Activated T-helper 1 cell treated with anti-CD3 and anti-CD28 coated beads, Interleukin-12 subunit alpha, Interleukin-12 subunit beta, Interleukin-2, Interleukin-4 antibody, amounts not matched to agents 30 ng/mL and 10 ng/mL and 1 ng/mL, durations not matched to agents 14 hours and 24 hours and 36 hours (primary cell): ENCODE measurements at regions of chr1 and their contacts with region 1.

Region 1: DNA sequence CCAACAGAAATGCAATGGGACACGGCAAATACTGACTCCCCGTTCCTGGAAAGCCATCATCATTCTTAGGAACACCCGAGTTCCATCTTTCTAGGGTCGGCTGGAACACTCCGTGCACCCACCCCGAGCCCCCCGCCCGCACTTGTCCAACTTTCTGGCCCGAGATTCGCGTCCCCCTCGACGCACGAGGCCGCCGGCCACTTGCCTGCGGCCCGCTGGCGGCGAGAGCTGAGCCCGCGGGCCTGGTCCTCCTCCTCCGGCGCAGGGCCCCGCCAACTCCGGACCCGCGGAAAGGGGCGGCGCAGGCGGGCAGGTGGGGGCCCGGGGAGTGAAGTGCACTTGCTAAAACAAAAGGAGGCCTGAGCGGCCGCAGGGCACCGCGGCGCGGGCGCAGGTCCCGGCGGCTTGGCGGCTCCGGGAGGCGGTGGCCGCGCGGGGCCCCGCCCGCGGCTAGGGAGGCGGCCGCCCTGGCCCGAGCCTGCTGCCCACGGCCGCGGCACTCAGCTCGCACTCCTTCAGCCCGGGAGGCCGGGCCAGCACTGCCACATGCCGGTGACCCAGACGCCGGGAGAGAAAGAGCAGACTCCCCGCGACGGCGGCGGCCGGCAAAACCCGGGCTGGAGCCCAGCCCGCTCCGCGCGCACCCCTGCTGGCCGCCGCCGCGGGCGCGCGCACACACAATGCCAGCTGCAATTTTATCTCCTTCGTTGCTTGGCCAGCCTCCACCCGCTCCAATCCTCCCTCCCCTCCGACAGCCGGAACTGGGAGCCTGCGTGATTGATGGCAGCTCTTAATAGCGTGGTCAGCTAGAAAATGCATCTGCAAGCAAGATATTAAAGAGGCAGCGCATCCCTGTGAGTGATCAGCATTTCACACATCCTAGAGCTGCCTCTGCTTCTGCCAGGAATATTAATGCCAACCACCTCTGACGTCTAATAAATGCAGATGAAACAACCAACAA is 114.3 kb downstream of the RERE start:
- DNase-seq: peak; percentile 69
- H3K4me3 Mint-ChIP-seq: peak overlapping the region; percentile 97
- H3K27ac Mint-ChIP-seq: peak overlapping the region; percentile 89
- H3K4me1 Mint-ChIP-seq: peaks cover 58% of the 10 kb centered on the region
- H3K27me3 Mint-ChIP-seq: peaks cover 3% of the 10 kb centered on the region

Region 2: GRCh38 chr1:8567146-8567545 is 136.0 kb before region 1 on chr1:
- intact Hi-C with region 1: no loop called
- DNase-seq: no peak
- H3K4me3 Mint-ChIP-seq: no peak overlapping the region
- H3K27ac Mint-ChIP-seq: no peak overlapping the region
- H3K4me1 Mint-ChIP-seq: peaks cover 42% of the 10 kb centered on the region
- H3K27me3 Mint-ChIP-seq: no peaks in the 10 kb centered on the region

Region 3: DNA sequence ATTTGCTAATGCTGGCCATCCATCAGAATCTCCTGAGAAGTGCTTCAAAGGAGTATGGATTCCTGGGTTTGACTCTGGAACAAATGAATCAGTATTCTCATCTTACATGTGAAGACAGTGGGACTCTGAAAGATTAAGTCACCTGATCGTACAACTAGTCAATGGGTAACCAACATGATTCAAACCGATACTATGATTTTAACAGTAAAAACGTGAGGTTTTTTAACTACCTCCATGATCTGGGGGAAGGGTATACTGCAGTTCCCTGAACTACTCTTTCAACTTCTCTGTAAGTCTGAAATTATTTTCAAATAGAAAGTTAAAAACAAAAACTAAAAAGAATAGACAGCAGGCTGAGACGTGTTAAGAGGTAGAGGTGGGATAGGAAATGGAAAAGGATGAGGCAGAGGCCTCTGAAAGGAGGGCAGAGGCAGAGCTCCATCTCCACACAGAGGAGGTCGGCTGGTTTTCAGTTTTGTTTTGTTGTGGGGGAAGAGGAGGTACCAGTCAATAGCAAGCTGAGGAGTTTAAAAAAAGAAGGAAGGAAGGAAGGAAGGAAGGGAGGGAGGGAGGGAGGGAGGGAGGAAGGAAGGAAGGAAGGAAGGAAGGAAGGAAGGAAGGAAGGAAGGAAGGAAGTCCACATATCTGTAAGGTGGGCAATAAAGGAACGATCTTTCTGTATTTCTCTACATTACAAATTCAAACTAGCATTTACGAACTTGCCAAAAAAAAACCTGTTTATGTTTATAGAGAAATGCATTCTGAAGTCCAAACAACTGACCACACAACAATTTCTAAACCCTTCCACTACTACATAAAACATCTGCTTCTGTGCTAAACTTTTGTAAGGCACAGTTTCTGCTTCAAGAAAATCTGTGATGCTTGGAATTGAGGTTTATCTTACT is 98.8 kb before region 1 on chr1:
- intact Hi-C with region 1: loop called (anchors 1 kb)
- DNase-seq: peak; percentile 34
- H3K4me3 Mint-ChIP-seq: peak overlapping the region; percentile 61
- H3K27ac Mint-ChIP-seq: peak overlapping the region; percentile 94
- H3K4me1 Mint-ChIP-seq: peaks cover 48% of the 10 kb centered on the region
- H3K27me3 Mint-ChIP-seq: no peaks in the 10 kb centered on the region

Region 4: GRCh38 chr1:8660411-8660828 is 42.7 kb before region 1 on chr1:
- intact Hi-C with region 1: loop called (anchors 5 kb)
- DNase-seq: no peak
- H3K4me3 Mint-ChIP-seq: no peak overlapping the region
- H3K27ac Mint-ChIP-seq: no peak overlapping the region
- H3K4me1 Mint-ChIP-seq: peaks cover 11% of the 10 kb centered on the region
- H3K27me3 Mint-ChIP-seq: peaks cover 1% of the 10 kb centered on the region

Region 5: GRCh38 chr1:8679395-8679800 is 23.7 kb before region 1 on chr1:
- intact Hi-C with region 1: loop called (anchors 1 kb)
- DNase-seq: no peak
- H3K4me3 Mint-ChIP-seq: no peak overlapping the region
- H3K27ac Mint-ChIP-seq: no peak overlapping the region
- H3K4me1 Mint-ChIP-seq: peaks cover 23% of the 10 kb centered on the region
- H3K27me3 Mint-ChIP-seq: no peaks in the 10 kb centered on the region

Region 6: DNA sequence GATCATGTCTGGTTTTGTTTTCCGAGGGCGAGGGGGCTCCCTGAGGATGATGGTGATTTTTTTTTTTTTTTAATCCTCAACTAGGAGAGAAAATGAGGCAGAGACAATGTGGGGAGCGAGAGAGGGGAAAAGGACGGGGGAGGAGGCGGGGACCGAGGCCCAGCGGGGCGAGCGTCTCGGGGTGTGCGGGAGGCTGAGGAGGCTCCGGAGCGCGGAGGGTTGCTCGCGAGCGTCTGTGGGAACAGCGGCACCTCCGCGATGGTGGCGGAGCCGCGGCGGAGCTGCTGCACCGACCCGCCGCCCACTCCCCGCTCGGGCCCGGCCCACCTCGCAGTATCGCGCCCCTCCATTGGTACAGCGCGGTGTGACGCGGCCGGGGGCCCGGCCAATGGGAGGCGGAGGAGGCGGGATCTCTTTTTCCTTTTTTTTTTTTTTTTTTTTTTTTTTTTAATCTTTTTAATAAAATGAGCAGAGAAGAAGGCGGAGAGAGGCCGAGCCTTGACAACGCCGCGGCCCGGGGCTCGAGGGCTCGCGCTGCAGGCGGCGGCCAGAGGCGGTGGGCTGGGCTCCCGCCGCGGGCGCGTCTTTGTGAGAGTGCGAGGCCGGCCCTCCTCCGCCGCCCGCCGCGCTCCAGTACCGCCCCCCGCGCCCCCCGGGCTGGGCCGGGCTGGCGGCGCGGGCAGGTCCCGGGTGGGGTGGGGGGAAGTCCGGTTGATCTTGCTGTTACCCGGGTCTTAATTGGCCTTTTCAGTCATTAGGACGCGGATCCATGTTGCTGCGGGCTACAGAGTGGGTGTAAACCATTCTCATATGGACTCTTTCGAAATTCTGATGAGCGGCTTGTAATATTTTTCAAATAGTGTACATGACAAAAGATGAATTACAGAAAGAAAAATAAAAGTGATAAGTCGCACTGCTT is 114.5 kb after region 1 on chr1 and contains the start of gene RERE:
- intact Hi-C with region 1: loop called (anchors 2 kb)
- DNase-seq: peak; percentile 96
- H3K4me3 Mint-ChIP-seq: peak within 1 kb of the TSS; percentile 86
- H3K27ac Mint-ChIP-seq: peak within 1 kb of the TSS; percentile 93
- H3K4me1 Mint-ChIP-seq: peaks cover 44% of the 10 kb centered on the region
- H3K27me3 Mint-ChIP-seq: peaks cover 12% of the 10 kb centered on the region
- total RNA-seq, gene RERE: 82.0 and 90.9 TPM in 2 replicates

Region 7: DNA sequence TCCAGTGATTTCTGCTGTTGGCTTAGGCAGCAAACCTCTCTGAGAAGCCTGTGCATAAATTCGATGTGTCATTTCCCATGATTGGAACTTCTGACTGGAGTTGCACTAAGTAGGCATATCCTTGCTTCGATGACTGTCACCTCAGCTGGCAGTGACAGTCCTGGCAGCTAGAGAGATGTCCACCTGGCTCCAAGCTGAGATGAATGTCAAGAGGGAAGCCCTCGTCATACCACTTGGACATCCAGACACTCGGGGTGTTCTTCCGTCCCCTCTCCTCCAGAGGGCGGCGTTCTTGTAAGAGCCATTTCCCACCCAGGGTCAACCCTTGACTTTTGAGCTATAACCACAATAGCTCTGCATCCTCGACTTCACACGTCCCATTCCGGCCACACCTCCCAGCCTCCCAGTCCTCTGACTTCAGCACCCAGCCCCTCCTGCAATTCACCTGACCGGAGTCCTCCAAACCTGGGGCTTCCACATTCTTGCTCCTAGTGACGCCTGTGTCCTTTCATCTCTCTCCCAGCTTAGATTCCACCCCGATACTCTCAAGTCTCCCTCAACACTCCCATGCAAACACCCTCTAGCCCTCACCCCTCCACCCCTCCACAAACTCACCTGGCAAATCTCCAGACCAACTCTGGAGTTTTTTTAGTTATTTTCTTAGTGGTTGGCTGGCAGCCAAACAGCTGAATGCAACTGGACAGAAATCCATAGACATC is 259.8 kb after region 1 on chr1:
- intact Hi-C with region 1: loop called (anchors 10 kb)
- DNase-seq: no peak
- H3K4me3 Mint-ChIP-seq: peak overlapping the region; percentile 49
- H3K27ac Mint-ChIP-seq: peak overlapping the region; percentile 74
- H3K4me1 Mint-ChIP-seq: peaks cover 85% of the 10 kb centered on the region
- H3K27me3 Mint-ChIP-seq: no peaks in the 10 kb centered on the region

Region 8: DNA sequence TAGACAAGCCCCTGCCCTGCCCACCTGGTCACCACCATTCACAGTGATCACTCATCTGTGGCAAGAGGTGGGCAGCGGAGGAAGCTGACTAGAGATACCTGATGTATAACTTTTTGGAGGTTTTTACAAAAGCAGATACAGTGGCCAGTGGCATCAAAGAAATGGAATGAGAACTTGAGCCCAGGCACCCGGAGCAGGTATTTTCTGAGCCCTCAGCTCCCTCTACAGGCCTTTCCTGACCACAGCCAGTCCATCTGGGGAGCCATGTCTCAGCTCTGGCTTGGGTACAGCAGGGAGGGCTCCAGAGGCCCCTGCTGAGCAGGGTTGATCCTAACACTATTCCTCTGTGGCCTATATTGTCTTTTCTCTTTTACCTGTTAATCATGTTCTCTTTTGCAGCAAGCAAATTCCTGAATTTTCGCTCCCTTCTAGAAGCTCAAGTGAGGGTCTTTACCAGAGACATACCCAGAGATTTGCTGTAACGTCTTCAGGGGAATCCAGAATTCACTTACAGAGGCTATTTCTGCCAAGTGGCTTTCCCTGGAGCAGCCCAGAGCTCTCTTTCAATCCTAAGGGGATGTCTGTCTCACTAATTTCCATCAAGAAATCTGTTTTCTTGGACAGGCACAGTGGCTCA is 398.5 kb after region 1 on chr1:
- intact Hi-C with region 1: no loop called
- DNase-seq: peak; percentile 18
- H3K4me3 Mint-ChIP-seq: no peak overlapping the region
- H3K27ac Mint-ChIP-seq: no peak overlapping the region
- H3K4me1 Mint-ChIP-seq: no peaks in the 10 kb centered on the region
- H3K27me3 Mint-ChIP-seq: peaks cover 4% of the 10 kb centered on the region